ENCODE measurements at regions of chr10 and their contacts with region 1.

Region 1: GRCh38 chr10:49512121-49512809 is 26.7 kb downstream of the ERCC6 start:
- DNase-seq: peak in 4 of 5 donors; percentile 35 to 46 (median 38)
- H3K4me3 ChIP-seq: no peak overlapping the region
- H3K4me3 Mint-ChIP-seq: no peak overlapping the region
- H3K27ac ChIP-seq: no peak overlapping the region
- H3K27ac Mint-ChIP-seq: no peak overlapping the region
- H3K4me1 ChIP-seq: peaks cover 21% of the 10 kb centered on the region
- H3K4me1 Mint-ChIP-seq: peaks cover 20 to 28% (median 24%) of the 10 kb centered on the region in 4 donors
- H3K27me3 ChIP-seq: no peaks in the 10 kb centered on the region
- H3K27me3 Mint-ChIP-seq: no peaks in the 10 kb centered on the region

Region 2: GRCh38 chr10:48981310-48981907 is 530.9 kb before region 1 on chr10:
- CTCF ChIA-PET with region 1: interaction called, 45 read pairs
- POLR2A ChIA-PET with region 1: no interaction called
- intact Hi-C with region 1: no loop called
- DNase-seq: peak in 4 of 5 donors; percentile 12 to 25 (median 22)
- H3K4me3 ChIP-seq: no peak overlapping the region
- H3K4me3 Mint-ChIP-seq: no peak overlapping the region
- H3K27ac ChIP-seq: no peak overlapping the region
- H3K27ac Mint-ChIP-seq: no peak overlapping the region
- H3K4me1 ChIP-seq: no peaks in the 10 kb centered on the region
- H3K4me1 Mint-ChIP-seq: no peaks in the 10 kb centered on the region
- H3K27me3 ChIP-seq: no peaks in the 10 kb centered on the region
- H3K27me3 Mint-ChIP-seq: peaks cover 0 to 2% of the 10 kb centered on the region in 2 donors

Region 3: GRCh38 chr10:49500418-49500817 is 11.8 kb before region 1 on chr10:
- CTCF ChIA-PET with region 1: interaction called, 23 read pairs
- POLR2A ChIA-PET with region 1: no interaction called
- intact Hi-C with region 1: no loop called
- DNase-seq: no peak
- H3K4me3 ChIP-seq: no peak overlapping the region
- H3K4me3 Mint-ChIP-seq: no peak overlapping the region
- H3K27ac ChIP-seq: no peak overlapping the region
- H3K27ac Mint-ChIP-seq: no peak overlapping the region
- H3K4me1 ChIP-seq: no peaks in the 10 kb centered on the region
- H3K4me1 Mint-ChIP-seq: peaks cover 6 to 25% (median 13%) of the 10 kb centered on the region in 4 donors
- H3K27me3 ChIP-seq: no peaks in the 10 kb centered on the region
- H3K27me3 Mint-ChIP-seq: peaks cover 0 to 1% of the 10 kb centered on the region in 2 donors

Region 4: DNA sequence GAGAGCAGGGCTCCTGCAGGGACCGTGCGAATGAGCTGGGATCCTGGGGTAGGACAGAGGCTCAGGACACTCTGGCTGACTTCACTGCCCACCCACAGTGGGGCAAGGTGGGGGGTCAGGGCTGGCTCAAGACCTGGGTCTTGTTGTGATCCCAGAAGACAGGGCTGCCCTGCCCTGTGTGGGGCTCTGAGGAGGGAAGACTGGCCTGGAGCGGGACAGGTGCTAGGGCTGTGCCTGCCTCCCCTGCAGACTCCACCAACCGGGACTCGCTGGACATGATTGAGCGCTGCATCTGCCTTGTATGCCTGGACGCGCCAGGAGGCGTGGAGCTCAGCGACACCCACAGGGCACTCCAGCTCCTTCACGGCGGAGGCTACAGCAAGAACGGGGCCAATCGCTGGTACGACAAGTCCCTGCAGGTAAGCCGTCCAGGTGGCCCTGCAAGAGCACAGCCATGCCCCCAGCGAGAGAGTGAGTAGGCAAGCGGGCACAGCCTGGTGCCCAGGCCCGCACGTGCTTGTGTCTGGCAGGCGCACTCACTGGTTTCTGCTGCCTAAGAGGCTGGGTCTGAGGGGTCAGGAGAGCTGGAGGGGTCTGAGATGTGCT is 134.1 kb after region 1 on chr10:
- CTCF ChIA-PET with region 1: no interaction called
- POLR2A ChIA-PET with region 1: no interaction called
- intact Hi-C with region 1: no loop called
- DNase-seq: no peak
- H3K4me3 ChIP-seq: no peak overlapping the region
- H3K4me3 Mint-ChIP-seq: no peak overlapping the region
- H3K27ac ChIP-seq: no peak overlapping the region
- H3K27ac Mint-ChIP-seq: no peak overlapping the region
- H3K4me1 ChIP-seq: no peaks in the 10 kb centered on the region
- H3K4me1 Mint-ChIP-seq: peaks cover 0 to 6% (median 2%) of the 10 kb centered on the region in 4 donors
- H3K27me3 ChIP-seq: no peaks in the 10 kb centered on the region
- H3K27me3 Mint-ChIP-seq: peaks cover 9 to 32% of the 10 kb centered on the region in 2 donors

Measured in CD4-positive, alpha-beta memory T cell (primary cell).